ENCODE measurements at regions of chr11 and their contacts with region 1.

Region 1: DNA sequence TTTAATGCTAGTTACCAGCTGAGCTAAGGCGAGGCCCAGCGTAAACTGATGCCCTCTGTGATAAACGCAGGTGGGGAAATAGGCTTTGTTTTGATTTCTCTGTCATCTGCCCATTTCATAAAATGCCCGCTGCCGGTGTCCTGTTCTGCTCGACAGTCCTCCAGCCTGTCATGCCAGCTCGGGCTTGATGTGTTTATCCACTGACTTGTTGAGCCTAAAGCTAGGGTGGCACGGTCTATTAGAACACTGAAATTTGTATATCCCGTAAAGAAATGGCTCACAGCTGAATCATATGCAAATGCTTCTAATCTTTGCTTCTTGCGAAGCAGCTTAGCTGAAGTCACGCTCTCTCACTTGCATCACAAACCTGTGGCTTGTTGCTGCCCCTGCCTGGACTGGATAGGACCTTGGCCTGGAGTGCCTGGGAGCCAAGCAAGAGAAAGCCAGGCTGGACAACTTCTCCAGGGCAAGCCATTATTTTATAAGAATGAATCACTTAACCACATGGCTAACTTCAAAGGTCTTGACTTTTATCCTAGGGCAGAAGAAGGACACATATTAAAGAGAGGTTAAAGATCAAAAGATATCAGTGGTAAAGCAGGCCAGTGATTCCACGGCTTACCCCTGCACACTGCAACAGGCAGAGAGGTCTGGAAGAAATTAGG is 33.1 kb downstream of the EHF start:
- DNase-seq: peak; percentile 98
- H3K4me3 Mint-ChIP-seq: peak overlapping the region; percentile 3
- H3K27ac Mint-ChIP-seq: peak overlapping the region; percentile 96
- H3K4me1 Mint-ChIP-seq: peaks cover 51% of the 10 kb centered on the region
- H3K27me3 Mint-ChIP-seq: no peaks in the 10 kb centered on the region
- CTCF ChIP-seq: no peak

Region 2: DNA sequence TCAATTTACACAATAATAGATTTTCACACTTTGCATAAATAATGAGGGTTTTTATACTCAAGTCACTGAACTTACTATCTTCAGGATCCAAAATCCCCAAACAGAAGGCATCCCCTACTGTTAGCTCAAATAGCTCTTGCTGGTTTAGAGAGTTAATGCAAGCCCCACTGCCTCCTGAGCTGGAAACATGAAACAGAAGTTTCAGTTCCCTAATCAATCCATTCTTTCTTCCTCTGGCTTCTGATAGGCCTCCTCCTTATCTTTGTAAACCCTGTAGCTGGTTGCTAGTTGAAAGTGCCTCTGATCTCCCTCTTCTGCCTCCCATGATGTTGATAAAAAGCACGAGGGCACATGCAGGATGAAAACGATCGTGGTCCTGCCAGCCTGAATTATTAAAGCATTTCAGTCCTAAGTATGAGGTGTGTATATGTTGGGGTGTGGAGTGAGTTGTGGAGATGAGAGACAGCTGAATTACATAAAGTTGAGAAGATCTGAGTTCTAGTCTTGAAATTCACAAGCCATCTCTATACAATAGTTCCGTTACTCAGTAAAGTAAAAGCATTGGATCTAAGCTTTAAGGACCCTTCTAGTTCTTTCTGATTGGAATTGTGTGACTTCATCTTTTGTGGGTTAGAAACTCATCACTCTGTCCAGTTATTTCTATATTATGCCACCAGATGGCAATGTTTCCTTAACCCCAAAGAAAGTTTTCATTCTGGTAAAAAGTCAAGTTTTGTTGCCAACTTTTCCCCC is 68.0 kb before region 1 on chr11:
- CTCF ChIA-PET with region 1: interaction called, 51 read pairs
- POLR2A ChIA-PET with region 1: interaction called, 72 read pairs
- intact Hi-C with region 1: loop called (anchors 1 kb)
- DNase-seq: peak; percentile 69
- H3K4me3 Mint-ChIP-seq: no peak overlapping the region
- H3K27ac Mint-ChIP-seq: peak overlapping the region; percentile 83
- H3K4me1 Mint-ChIP-seq: peaks cover 23% of the 10 kb centered on the region
- H3K27me3 Mint-ChIP-seq: no peaks in the 10 kb centered on the region
- CTCF ChIP-seq: peak; percentile 66

Region 3: GRCh38 chr11:34633990-34634693 is 19.8 kb before region 1 on chr11:
- CTCF ChIA-PET with region 1: interaction called, 4 read pairs
- POLR2A ChIA-PET with region 1: interaction called, 273 read pairs
- intact Hi-C with region 1: no loop called
- DNase-seq: peak; percentile 52
- H3K4me3 Mint-ChIP-seq: no peak overlapping the region
- H3K27ac Mint-ChIP-seq: peak overlapping the region; percentile 88
- H3K4me1 Mint-ChIP-seq: peaks cover 25% of the 10 kb centered on the region
- H3K27me3 Mint-ChIP-seq: no peaks in the 10 kb centered on the region
- CTCF ChIP-seq: no peak

Region 4: GRCh38 chr11:34671946-34672345 is 18.0 kb after region 1 on chr11:
- CTCF ChIA-PET with region 1: interaction called, 3 read pairs
- POLR2A ChIA-PET with region 1: interaction called, 13 read pairs
- intact Hi-C with region 1: no loop called
- DNase-seq: no peak
- H3K4me3 Mint-ChIP-seq: no peak overlapping the region
- H3K27ac Mint-ChIP-seq: no peak overlapping the region
- H3K4me1 Mint-ChIP-seq: peaks cover 12% of the 10 kb centered on the region
- H3K27me3 Mint-ChIP-seq: no peaks in the 10 kb centered on the region
- CTCF ChIP-seq: no peak

Region 5: GRCh38 chr11:34749666-34750659 is 96.0 kb after region 1 on chr11:
- CTCF ChIA-PET with region 1: interaction called, 6 read pairs
- POLR2A ChIA-PET with region 1: interaction called, 54 read pairs
- intact Hi-C with region 1: loop called (anchors 2 kb)
- DNase-seq: peak; percentile 96
- H3K4me3 Mint-ChIP-seq: peak overlapping the region; percentile 66
- H3K27ac Mint-ChIP-seq: peak overlapping the region; percentile 90
- H3K4me1 Mint-ChIP-seq: peaks cover 46% of the 10 kb centered on the region
- H3K27me3 Mint-ChIP-seq: no peaks in the 10 kb centered on the region
- CTCF ChIP-seq: no peak

Region 6: DNA sequence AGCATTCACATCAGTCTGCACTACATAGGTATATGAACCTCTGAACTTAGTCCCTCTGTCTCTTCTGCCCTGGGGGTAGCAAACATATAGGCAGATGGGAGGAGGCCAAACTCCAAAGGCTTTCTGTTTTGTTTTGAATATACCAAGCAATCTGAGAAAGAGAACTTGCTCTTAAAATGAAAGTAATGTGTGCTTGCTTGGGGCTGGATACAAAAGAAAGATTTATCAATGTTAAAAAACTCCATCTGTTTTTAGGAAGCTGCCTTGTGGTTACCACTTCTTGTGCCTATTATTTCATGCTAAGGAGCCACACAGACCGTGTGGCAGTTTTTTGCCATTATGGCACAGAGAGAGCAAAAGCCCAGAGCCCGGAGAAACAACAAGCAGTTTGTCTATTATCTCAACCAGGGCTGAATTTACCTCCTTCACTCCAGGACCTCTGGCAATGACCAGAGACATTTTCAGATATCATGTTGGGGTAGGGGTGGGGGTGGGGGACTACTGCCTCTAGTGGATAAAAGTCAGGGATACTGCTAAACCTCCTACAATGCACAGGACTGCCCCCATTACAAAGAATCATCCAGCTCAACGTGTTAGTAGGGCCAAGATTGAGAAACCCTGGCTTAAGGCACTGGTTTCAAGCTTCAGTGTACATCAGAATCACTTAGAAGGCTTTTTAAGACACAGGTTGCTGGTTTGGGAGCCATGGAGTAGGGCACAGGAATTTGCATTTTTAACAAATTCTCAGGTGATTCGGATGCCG is 138.0 kb after region 1 on chr11:
- CTCF ChIA-PET with region 1: no interaction called
- POLR2A ChIA-PET with region 1: no interaction called
- intact Hi-C with region 1: no loop called
- DNase-seq: no peak
- H3K4me3 Mint-ChIP-seq: no peak overlapping the region
- H3K27ac Mint-ChIP-seq: no peak overlapping the region
- H3K4me1 Mint-ChIP-seq: no peaks in the 10 kb centered on the region
- H3K27me3 Mint-ChIP-seq: no peaks in the 10 kb centered on the region
- CTCF ChIP-seq: no peak

Region 7: GRCh38 chr11:34890812-34891211 is 236.9 kb after region 1 on chr11:
- CTCF ChIA-PET with region 1: interaction called, 20 read pairs
- POLR2A ChIA-PET with region 1: interaction called, 24 read pairs
- intact Hi-C with region 1: loop called (anchors 1 kb)
- DNase-seq: peak; percentile 64
- H3K4me3 Mint-ChIP-seq: no peak overlapping the region
- H3K27ac Mint-ChIP-seq: no peak overlapping the region
- H3K4me1 Mint-ChIP-seq: peaks cover 12% of the 10 kb centered on the region
- H3K27me3 Mint-ChIP-seq: no peaks in the 10 kb centered on the region
- CTCF ChIP-seq: peak; percentile 46

Measured in MCF 10A (cell line).